RWPE1 (cell line): ENCODE measurements at regions of chr5 and their contacts with region 1.

Region 1: GRCh38 chr5:176429972-176430371 is 13.6 kb upstream of the CLTB start:
- DNase-seq: no peak
- H3K27ac ChIP-seq: no peak overlapping the region
- CTCF ChIP-seq: no peak

Region 2: DNA sequence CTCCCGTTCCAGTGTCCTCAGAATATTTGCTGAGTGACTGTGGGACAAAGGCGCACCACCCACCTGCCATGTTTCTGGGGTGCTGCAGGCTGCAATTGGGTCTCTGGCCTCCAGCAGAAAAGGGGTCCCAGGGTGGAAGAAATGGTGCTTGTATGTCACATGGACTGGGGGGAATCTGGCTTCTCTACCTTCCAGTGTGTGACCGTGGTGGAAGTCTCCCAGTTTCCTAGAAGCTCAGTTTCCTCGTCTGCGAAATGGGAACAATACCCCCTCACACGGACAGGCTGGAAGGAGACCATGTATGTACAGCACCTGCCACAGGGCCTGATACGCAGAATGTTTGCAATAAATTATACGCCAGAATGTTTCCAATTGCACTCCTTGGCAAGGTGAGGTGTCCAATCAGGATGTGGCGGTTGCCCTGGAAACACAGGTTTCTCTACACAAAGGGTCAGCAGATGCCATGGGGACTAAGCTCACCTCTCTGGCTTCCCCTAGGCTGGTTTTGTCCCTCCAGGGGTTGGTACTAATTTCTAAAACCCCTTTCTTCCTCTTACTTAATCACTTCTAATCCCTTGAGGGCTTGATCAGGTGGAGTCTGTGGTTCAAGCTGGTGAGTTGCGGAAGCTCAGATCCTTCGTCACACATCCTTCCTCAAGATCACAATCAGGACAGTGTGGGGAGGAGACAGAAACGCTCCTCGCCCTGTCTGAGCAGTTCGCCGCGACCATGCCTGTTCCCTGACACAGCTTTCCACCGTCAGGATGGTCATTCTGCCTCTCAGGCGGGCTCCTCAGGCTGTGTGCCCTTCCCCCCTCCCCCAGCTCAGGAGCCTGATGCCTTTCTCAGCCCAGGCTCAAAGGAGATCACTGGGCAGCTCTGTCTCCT is 534.5 kb before region 1 on chr5:
- CTCF ChIA-PET with region 1: no interaction called
- POLR2A ChIA-PET with region 1: no interaction called
- DNase-seq: no peak
- H3K27ac ChIP-seq: no peak overlapping the region
- CTCF ChIP-seq: no peak

Region 3: DNA sequence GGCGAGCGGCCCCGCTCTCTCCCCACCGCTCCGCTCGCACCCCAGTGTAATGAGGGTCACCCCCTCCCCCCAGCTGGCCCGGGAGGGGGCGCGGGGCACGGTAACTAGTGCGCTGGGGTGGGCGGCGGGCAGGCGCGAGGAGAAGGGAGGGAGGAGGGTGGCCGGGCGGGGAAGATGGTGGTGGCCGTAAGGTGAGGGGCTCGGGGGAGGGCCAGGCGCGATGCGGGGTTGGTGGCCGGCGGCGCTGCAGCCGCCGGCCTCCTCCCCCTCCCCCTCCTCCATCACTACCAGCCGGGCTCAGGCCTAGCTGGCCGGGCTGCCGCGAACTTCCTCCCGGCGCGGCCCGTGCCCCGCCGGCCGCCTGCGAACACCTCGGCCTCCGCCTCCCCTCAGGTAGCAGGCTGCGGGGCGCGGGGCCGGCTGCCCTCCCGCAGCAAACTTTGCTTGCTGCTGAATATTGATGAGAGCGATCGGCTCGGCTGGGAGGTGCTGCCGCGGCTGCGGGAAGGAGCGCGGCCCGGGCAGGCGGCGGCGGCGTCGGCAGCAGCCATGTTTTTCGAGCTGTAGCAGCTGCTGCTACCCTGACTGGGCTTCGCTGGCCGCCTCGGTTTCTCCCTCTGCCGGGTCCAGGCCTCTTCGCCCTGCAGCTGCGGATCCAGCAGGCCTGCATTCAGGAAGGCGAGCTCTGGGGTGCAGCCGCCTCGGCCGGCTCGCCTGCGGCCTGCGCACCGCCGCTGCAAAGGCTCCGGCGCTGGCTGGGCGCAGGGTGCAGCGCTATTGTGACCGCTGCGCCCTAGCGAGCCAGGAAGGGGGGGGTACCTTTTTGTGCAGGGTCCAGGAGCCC is 704.1 kb after region 1 on chr5:
- CTCF ChIA-PET with region 1: no interaction called
- POLR2A ChIA-PET with region 1: interaction called, 10 read pairs
- DNase-seq: peak; percentile 65
- H3K27ac ChIP-seq: peak overlapping the region; percentile 80
- CTCF ChIP-seq: no peak